ENCODE measurements at regions of chr12 and their contacts with region 1.

Region 1: GRCh38 chr12:64610149-64610678 is at the start of gene RASSF3:
- DNase-seq: peak; percentile 59 to 87 (median 74)
- ATAC-seq: peak; percentile 66 to 67
- H3K4me3 Mint-ChIP-seq: peak within 1 kb of the TSS; percentile 87 to 100 (median 98)
- H3K27ac Mint-ChIP-seq: peak within 1 kb of the TSS; percentile 93 to 98 (median 96)
- H3K4me1 Mint-ChIP-seq: peaks cover 12 to 46% (median 42%) of the 10 kb centered on the region in 4 donors
- H3K27me3 Mint-ChIP-seq: no peaks in the 10 kb centered on the region
- polyA plus RNA-seq, gene RASSF3: 5.5 to 7.8 (median 5.7) TPM

Region 2: DNA sequence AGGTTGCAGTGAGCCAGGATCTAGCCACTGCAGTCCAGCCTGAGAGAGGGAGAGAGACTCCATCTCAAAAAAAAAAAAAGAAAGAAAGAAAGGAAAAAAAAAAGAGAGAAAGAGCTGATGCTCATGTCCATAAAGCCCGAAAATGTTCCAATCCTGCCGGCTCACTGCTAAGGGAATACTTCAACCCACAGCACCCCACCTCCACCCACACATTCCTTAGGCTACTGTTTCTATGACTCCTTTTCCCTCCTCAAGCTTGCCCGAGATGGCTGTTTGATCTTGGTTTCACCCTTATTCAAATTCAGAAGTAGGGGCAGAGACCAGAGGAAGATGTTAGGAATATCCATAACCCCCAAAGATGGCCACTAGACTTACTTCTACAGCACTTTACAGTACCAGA is 59.5 kb before region 1 on chr12:
- POLR2A ChIA-PET with region 1: interaction called, 19 read pairs
- DNase-seq: no peak
- ATAC-seq: no peak
- H3K4me3 Mint-ChIP-seq: no peak overlapping the region
- H3K27ac Mint-ChIP-seq: peak overlapping the region in 4 of 10 donors; percentile 33 to 80 (median 55)
- H3K4me1 Mint-ChIP-seq: peaks cover 2 to 10% (median 8%) of the 10 kb centered on the region in 4 donors
- H3K27me3 Mint-ChIP-seq: peaks cover 0 to 3% (median 0%) of the 10 kb centered on the region in 5 donors

Region 3: DNA sequence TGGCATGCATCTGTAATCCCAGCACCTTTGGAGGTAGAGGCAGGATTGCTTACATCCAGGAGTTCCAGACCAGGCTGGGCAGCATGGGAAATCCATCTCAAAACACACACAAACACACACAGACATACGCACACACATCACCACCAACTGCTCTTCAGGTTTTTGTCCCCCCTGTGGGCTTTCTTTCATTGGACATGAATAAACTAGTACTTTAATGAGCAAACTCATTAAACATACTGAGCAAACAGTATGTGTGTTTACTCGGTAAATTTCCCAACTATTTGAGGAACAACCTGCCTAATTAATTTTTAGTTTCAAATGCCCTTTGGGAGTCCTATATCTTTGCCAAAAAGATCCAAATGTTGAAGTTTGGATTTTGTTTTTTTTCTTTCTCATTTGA is 10.0 kb before region 1 on chr12:
- POLR2A ChIA-PET with region 1: interaction called, 17 read pairs
- DNase-seq: no peak
- ATAC-seq: no peak
- H3K4me3 Mint-ChIP-seq: peak overlapping the region in 7 of 10 donors; percentile 6 to 79 (median 43)
- H3K27ac Mint-ChIP-seq: peak overlapping the region in 2 of 10 donors; percentile 25 to 44
- H3K4me1 Mint-ChIP-seq: peaks cover 23 to 48% (median 41%) of the 10 kb centered on the region in 4 donors
- H3K27me3 Mint-ChIP-seq: peaks cover 0 to 1% (median 0%) of the 10 kb centered on the region in 5 donors

Region 4: GRCh38 chr12:64669270-64669842 is 59.1 kb after region 1 on chr12:
- POLR2A ChIA-PET with region 1: interaction called, 368 read pairs
- DNase-seq: peak in 9 of 10 donors; percentile 33 to 87 (median 60)
- ATAC-seq: peak; percentile 83 to 90
- H3K4me3 Mint-ChIP-seq: peak overlapping the region; percentile 87 to 95 (median 92)
- H3K27ac Mint-ChIP-seq: peak overlapping the region; percentile 85 to 100 (median 98)
- H3K4me1 Mint-ChIP-seq: peaks cover 53 to 97% (median 86%) of the 10 kb centered on the region in 4 donors
- H3K27me3 Mint-ChIP-seq: no peaks in the 10 kb centered on the region

Region 5: GRCh38 chr12:64696080-64696741 is 86.0 kb after region 1 on chr12:
- POLR2A ChIA-PET with region 1: interaction called, 368 read pairs
- DNase-seq: no peak
- ATAC-seq: peak in 1 of 2 donors; percentile 19
- H3K4me3 Mint-ChIP-seq: peak overlapping the region in 8 of 10 donors; percentile 0 to 63 (median 51)
- H3K27ac Mint-ChIP-seq: peak overlapping the region; percentile 80 to 95 (median 90)
- H3K4me1 Mint-ChIP-seq: peaks cover 50 to 81% (median 80%) of the 10 kb centered on the region in 4 donors
- H3K27me3 Mint-ChIP-seq: no peaks in the 10 kb centered on the region

Region 6: DNA sequence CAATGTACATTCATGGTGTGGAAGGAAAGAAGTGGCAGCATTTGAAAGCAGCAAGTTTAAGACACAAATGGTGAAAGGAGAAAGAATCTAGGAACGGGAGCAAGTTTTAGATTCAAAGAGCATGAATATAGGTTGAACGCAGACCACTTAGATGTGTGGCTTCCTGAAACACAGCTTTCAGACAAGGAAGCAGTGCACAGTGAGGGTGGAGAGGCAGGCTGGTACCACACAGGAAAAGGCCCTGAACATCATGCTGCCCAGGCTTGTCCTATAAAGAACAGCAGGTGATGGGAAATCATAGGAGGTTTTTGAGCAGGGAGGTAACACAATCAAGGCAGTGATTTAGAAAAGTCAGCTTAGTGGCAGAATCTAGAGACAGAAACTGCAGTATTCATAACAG is 113.4 kb after region 1 on chr12:
- POLR2A ChIA-PET with region 1: no interaction called
- DNase-seq: no peak
- ATAC-seq: peak in 1 of 2 donors; percentile 47
- H3K4me3 Mint-ChIP-seq: peak overlapping the region in 1 of 10 donors; percentile 15
- H3K27ac Mint-ChIP-seq: peak overlapping the region in 7 of 10 donors; percentile 12 to 84 (median 53)
- H3K4me1 Mint-ChIP-seq: peaks cover 6 to 12% (median 11%) of the 10 kb centered on the region in 4 donors
- H3K27me3 Mint-ChIP-seq: no peaks in the 10 kb centered on the region

Region 7: GRCh38 chr12:65086236-65086635 is 476.0 kb after region 1 on chr12:
- POLR2A ChIA-PET with region 1: no interaction called
- DNase-seq: no peak
- ATAC-seq: no peak
- H3K4me3 Mint-ChIP-seq: no peak overlapping the region
- H3K27ac Mint-ChIP-seq: peak overlapping the region in 1 of 10 donors; percentile 1
- H3K4me1 Mint-ChIP-seq: no peaks in the 10 kb centered on the region
- H3K27me3 Mint-ChIP-seq: peaks cover 10 to 24% (median 13%) of the 10 kb centered on the region in 5 donors